HEK293 (cell line): ENCODE measurements at regions of chrX and their contacts with region 1.

Region 1: GRCh38 chrX:117992324-117992723 is 124.3 kb downstream of the KLHL13 start:
- H3K4me3 ChIP-seq: no peak overlapping the region
- H3K27ac ChIP-seq: no peak overlapping the region
- H3K4me1 ChIP-seq: peaks cover 6% of the 10 kb centered on the region; the same call in 1 of the 2 replicates
- CTCF ChIP-seq: no peak

Region 2: GRCh38 chrX:118226090-118226428 is 233.7 kb after region 1 on chrX:
- CTCF ChIA-PET with region 1: interaction called, 13 read pairs
- POLR2A ChIA-PET with region 1: interaction called, 4 read pairs
- H3K4me3 ChIP-seq: no peak overlapping the region
- H3K27ac ChIP-seq: no peak overlapping the region
- H3K4me1 ChIP-seq: no peaks in the 10 kb centered on the region
- CTCF ChIP-seq: peak; percentile 42; the same call in 1 of the 2 replicates